ENCODE measurements at regions of chr12 and their contacts with region 1.

Region 1: GRCh38 chr12:104695453-104696148 is 238.9 kb downstream of the CHST11 start:
- DNase-seq: peak; percentile 92
- ATAC-seq: peak; percentile 86
- H3K4me3 Mint-ChIP-seq: peak overlapping the region; percentile 36
- H3K27ac Mint-ChIP-seq: peak overlapping the region; percentile 92
- H3K4me1 Mint-ChIP-seq: peaks cover 69% of the 10 kb centered on the region
- H3K27me3 Mint-ChIP-seq: no peaks in the 10 kb centered on the region

Region 2: GRCh38 chr12:104137913-104138796 is 557.4 kb before region 1 on chr12 and contains the start of gene NFYB:
- CTCF ChIA-PET with region 1: no interaction called
- POLR2A ChIA-PET with region 1: no interaction called
- intact Hi-C with region 1: loop called in 1 of 2 experiments (anchors 5 kb)
- DNase-seq: peak; percentile 95
- ATAC-seq: peak; percentile 98
- H3K4me3 Mint-ChIP-seq: peak within 1 kb of the TSS; percentile 83
- H3K27ac Mint-ChIP-seq: peak within 1 kb of the TSS; percentile 90
- H3K4me1 Mint-ChIP-seq: peaks cover 19% of the 10 kb centered on the region
- H3K27me3 Mint-ChIP-seq: no peaks in the 10 kb centered on the region
- total RNA-seq, gene NFYB: 18.8 to 27.2 TPM

Region 3: DNA sequence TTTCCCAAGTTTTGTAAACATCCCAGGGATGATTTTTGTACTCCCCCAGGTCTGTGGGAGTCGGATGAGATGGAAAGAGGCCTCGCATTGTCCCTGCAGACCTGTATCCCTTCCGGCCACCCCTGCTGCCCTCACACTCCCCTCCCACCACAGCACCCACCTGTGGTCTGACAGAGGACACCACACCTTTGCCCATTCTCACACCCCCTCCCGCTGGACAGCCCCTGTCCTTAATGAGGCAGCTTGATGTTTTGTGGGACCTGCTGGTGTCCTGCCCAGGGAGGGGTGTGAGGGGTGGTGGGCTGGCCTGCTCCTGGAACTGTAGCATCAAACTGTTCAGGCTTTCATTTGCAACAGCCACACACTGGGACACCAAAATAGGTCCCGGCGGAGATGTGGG is 320.8 kb before region 1 on chr12:
- CTCF ChIA-PET with region 1: no interaction called
- POLR2A ChIA-PET with region 1: no interaction called
- intact Hi-C with region 1: no loop called
- DNase-seq: no peak
- ATAC-seq: no peak
- H3K4me3 Mint-ChIP-seq: no peak overlapping the region
- H3K27ac Mint-ChIP-seq: no peak overlapping the region
- H3K4me1 Mint-ChIP-seq: peaks cover 11% of the 10 kb centered on the region
- H3K27me3 Mint-ChIP-seq: no peaks in the 10 kb centered on the region

Region 4: DNA sequence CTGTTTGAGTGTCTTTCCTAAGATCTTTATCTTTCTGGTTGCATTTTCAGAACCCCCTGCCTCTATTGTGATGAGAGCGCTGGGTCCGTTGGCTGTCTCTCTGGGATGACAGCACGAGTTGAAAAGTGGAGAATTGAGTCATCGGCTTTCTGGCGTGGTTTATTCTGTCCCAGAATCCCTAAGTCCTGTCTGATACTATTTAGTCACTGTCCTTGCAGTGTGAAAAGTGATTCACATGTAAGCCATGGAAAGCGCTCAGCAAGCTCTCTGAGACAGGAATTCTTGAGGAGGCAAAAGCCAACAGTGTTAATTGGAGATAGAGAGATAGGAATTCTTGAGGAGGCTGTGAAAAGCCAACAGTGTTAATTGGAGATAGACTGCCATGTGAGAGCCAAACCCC is 117.1 kb before region 1 on chr12:
- CTCF ChIA-PET with region 1: no interaction called
- POLR2A ChIA-PET with region 1: no interaction called
- intact Hi-C with region 1: loop called in 1 of 2 experiments (anchors 2 kb)
- DNase-seq: peak; percentile 63
- ATAC-seq: peak; percentile 65
- H3K4me3 Mint-ChIP-seq: no peak overlapping the region
- H3K27ac Mint-ChIP-seq: peak overlapping the region; percentile 8
- H3K4me1 Mint-ChIP-seq: peaks cover 75% of the 10 kb centered on the region
- H3K27me3 Mint-ChIP-seq: no peaks in the 10 kb centered on the region

Region 5: GRCh38 chr12:104632724-104633201 is 62.8 kb before region 1 on chr12:
- CTCF ChIA-PET with region 1: no interaction called
- POLR2A ChIA-PET with region 1: no interaction called
- intact Hi-C with region 1: no loop called
- DNase-seq: peak; percentile 35
- ATAC-seq: peak; percentile 36
- H3K4me3 Mint-ChIP-seq: no peak overlapping the region
- H3K27ac Mint-ChIP-seq: no peak overlapping the region
- H3K4me1 Mint-ChIP-seq: peaks cover 16% of the 10 kb centered on the region
- H3K27me3 Mint-ChIP-seq: no peaks in the 10 kb centered on the region

Region 6: DNA sequence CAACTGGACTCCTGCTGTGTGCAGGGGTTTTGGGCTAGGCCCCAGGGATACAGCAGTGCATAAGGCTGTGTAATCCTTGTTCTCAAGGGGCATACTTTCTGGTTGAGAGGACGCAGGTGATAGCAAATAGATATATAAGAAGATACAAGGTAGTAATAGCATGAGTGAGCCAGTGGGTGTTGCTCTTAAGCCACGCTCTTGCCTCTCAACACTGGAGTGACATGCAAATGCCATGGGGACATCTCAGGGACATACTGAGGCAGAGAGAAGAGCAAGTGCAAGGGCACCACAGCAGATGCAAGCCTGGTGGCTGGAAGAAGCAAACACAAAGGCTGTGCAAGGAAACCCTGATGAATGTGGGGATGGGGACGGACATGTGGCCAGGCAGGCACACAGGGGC is 15.5 kb before region 1 on chr12:
- CTCF ChIA-PET with region 1: interaction called, 19 read pairs
- POLR2A ChIA-PET with region 1: interaction called, 5 read pairs
- intact Hi-C with region 1: loop called in 1 of 2 experiments (anchors 1 kb)
- DNase-seq: peak; percentile 62
- ATAC-seq: peak; percentile 59
- H3K4me3 Mint-ChIP-seq: no peak overlapping the region
- H3K27ac Mint-ChIP-seq: peak overlapping the region; percentile 69
- H3K4me1 Mint-ChIP-seq: peaks cover 51% of the 10 kb centered on the region
- H3K27me3 Mint-ChIP-seq: no peaks in the 10 kb centered on the region

Region 7: DNA sequence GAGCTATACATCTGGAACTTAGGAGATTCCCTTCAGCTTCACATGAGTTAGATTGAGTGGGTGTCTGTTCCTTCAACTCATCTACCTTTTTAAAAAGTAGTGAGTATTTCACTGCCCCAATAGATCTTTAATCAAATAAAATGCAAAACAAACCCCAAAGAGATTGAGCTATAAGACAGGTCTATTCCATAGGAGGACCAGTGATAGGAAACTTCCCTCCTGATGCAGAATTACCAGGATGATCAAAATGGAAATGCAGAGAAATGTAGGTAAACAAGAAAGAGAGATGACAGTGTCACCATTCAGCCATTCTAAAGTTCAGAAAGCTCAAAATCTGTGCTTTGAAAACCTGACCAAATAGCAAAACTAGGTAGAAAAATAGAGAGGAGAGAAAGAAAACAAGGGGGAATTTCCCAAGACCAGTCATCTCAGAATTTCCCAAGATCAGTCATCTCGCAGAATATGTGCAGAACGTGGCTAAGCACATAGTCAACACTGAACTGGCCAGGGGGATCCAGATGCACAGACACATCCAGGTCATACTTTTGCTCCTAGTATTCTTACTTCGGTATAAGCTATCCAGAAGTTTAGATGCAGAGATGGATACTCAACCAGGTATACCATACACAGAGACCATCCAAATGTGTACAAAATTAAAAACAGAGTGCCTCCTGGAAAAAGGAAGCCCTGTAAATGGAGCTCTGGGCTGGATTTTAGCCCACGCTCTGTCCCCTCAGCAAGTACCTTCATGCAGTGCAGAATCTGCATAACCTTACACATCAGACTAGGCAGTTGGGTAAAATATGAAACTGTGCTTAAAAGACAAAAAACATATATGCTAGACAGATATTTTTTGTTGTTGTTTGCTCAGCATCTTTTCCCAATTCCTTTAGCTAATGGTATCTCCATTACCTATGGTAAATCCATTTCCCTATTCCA is 235.1 kb after region 1 on chr12:
- CTCF ChIA-PET with region 1: no interaction called
- POLR2A ChIA-PET with region 1: no interaction called
- intact Hi-C with region 1: loop called in 1 of 2 experiments (anchors 1 kb)
- DNase-seq: peak; percentile 73
- ATAC-seq: peak; percentile 98
- H3K4me3 Mint-ChIP-seq: peak overlapping the region; percentile 30
- H3K27ac Mint-ChIP-seq: peak overlapping the region; percentile 77
- H3K4me1 Mint-ChIP-seq: peaks cover 29% of the 10 kb centered on the region
- H3K27me3 Mint-ChIP-seq: peaks cover 1% of the 10 kb centered on the region